ENCODE measurements at regions of chr18 and their contacts with region 1.

Region 1: DNA sequence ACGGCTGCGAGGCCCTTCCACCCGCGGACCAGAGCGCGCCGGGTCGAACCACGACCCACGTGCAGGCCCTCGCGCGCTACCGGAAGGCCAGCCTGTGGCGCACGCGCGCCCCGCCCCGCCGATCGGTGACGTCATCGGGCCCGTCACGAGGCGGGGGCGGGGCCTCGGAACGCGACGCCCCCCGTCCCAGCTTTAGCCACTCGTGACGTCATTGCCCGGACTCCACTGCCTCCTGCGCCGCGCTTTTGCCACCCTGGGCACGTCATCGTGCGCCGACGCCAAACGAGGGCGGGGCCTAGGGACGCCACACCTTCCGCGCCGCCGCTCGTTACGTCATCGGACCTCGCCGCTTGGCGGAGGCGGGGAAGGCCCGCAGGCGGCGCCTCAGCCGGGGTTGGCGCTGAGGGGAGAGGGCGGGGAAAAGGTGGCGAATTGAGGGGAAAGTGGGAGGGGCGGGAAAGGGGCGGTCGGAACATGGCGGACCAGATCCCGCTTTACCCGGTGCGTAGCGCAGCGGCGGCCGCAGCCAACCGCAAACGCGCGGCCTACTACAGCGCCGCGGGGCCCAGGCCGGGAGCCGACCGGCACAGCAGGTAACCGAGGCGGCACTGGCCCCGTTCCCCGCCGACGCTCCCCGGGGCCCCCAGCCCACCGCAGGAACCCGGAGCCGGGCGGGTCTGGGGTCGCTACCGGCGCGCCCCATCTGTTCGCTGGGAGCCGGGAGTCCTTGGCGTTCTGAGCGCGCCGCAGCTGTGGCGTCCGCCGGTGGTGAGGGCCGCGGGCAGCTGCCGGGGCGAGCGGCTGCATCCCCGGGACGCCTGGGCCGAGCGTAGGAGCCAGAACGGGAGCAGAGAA is at the start of gene ATP9B:
- DNase-seq: peak; percentile 99
- total RNA-seq, gene ATP9B: 18.5 TPM

Region 2: GRCh38 chr18:79679111-79679872 is 610.1 kb after region 1 on chr18 and contains the start of gene CTDP1:
- intact Hi-C with region 1: loop called (anchors 10 kb)
- DNase-seq: peak; percentile 100
- total RNA-seq, gene CTDP1: 10.8 TPM